Activated T-helper 2 cell treated with anti-CD3 and anti-CD28 coated beads, Interferon-gamma antibody, Interleukin-2, Interleukin-4, amounts not matched to agents 10 μg/mL and 5 μg/mL and 100 μg/mL, durations not matched to agents 14 hours and 24 hours and 36 hours (primary cell): ENCODE measurements at regions of chr1 and their contacts with region 1.

Region 1: GRCh38 chr1:173195596-173196088 is 11.5 kb downstream of the TNFSF4 start:
- DNase-seq: peak; percentile 12
- H3K4me3 Mint-ChIP-seq: no peak overlapping the region
- H3K27ac Mint-ChIP-seq: peak overlapping the region; percentile 57
- H3K4me1 Mint-ChIP-seq: peaks cover 17% of the 10 kb centered on the region
- H3K27me3 Mint-ChIP-seq: peaks cover 33% of the 10 kb centered on the region

Region 2: DNA sequence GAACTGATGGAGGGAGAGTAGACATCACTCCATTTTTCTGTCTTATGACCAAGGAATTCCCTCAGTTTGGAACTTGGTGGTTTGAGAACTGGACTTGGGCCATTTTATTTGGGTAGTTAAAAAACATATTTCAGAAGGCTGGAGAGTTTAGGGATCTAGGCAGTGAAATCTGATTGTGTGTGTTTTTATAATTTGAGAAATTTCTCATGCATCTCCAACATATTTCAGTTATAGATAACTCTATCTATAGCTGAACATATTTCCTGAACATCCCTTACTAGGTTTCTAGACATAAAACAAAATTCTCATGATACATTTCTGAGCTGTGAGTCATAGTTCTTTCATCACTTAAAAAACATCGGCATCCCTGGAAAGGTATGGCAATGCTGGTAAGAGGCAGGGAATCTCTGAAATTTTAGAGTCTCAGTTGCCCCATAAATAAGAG is 434.0 kb before region 1 on chr1:
- intact Hi-C with region 1: loop called (anchors 5 kb)
- DNase-seq: no peak
- H3K4me3 Mint-ChIP-seq: no peak overlapping the region
- H3K27ac Mint-ChIP-seq: no peak overlapping the region
- H3K4me1 Mint-ChIP-seq: peaks cover 37% of the 10 kb centered on the region
- H3K27me3 Mint-ChIP-seq: peaks cover 42% of the 10 kb centered on the region

Region 3: DNA sequence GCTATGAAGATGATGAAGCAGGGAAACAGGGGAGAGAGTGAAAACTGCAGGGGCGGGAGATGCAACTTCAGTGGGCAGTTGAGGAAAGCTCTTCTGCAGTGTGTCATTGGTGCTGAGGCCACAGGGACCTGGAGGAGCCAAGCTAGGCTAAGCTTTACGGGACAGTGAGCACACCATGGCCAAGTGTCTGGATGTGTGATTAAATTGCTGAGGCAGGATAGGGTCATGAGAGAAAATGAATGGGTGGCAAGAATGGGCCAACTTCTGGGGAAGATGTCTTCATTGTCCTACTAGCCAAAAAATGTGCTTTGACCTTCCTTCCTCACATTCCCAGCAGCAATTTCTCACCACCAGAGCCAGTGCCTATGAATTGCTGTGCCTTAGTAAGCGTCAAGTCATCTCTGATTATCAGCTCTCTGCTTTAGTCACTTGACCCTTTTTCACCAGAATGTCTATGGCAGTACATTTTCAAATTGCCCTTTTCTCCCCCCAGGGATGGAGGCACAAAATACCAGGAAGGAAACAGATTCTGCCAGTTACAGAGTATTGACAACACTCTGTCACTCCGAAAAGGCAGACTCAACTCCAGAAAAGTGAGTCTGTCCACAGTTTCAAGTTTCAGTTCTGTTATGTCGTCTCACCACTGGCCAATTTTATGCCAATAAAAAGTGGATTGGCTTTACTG is 312.4 kb before region 1 on chr1:
- intact Hi-C with region 1: loop called (anchors 5 kb)
- DNase-seq: no peak
- H3K4me3 Mint-ChIP-seq: no peak overlapping the region
- H3K27ac Mint-ChIP-seq: peak overlapping the region; percentile 18
- H3K4me1 Mint-ChIP-seq: peaks cover 19% of the 10 kb centered on the region
- H3K27me3 Mint-ChIP-seq: peaks cover 67% of the 10 kb centered on the region

Region 4: GRCh38 chr1:173222149-173223030 is 26.7 kb after region 1 on chr1:
- intact Hi-C with region 1: loop called (anchors 1 kb)
- DNase-seq: no peak
- H3K4me3 Mint-ChIP-seq: no peak overlapping the region
- H3K27ac Mint-ChIP-seq: peak overlapping the region; percentile 40
- H3K4me1 Mint-ChIP-seq: peaks cover 13% of the 10 kb centered on the region
- H3K27me3 Mint-ChIP-seq: peaks cover 7% of the 10 kb centered on the region

Region 5: GRCh38 chr1:173304529-173305227 is 109.0 kb after region 1 on chr1:
- intact Hi-C with region 1: no loop called
- DNase-seq: no peak
- H3K4me3 Mint-ChIP-seq: no peak overlapping the region
- H3K27ac Mint-ChIP-seq: no peak overlapping the region
- H3K4me1 Mint-ChIP-seq: peaks cover 6% of the 10 kb centered on the region
- H3K27me3 Mint-ChIP-seq: peaks cover 13% of the 10 kb centered on the region